ENCODE measurements at regions of chr5 and their contacts with region 1.

Region 1: GRCh38 chr5:53095931-53096525 is 13.5 kb downstream of the MOCS2 start:
- DNase-seq: peak; percentile 51
- H3K4me3 ChIP-seq: no peak overlapping the region
- H3K27ac ChIP-seq: no peak overlapping the region
- H3K4me1 ChIP-seq: no peaks in the 10 kb centered on the region
- CTCF ChIP-seq: peak; percentile 97

Region 2: DNA sequence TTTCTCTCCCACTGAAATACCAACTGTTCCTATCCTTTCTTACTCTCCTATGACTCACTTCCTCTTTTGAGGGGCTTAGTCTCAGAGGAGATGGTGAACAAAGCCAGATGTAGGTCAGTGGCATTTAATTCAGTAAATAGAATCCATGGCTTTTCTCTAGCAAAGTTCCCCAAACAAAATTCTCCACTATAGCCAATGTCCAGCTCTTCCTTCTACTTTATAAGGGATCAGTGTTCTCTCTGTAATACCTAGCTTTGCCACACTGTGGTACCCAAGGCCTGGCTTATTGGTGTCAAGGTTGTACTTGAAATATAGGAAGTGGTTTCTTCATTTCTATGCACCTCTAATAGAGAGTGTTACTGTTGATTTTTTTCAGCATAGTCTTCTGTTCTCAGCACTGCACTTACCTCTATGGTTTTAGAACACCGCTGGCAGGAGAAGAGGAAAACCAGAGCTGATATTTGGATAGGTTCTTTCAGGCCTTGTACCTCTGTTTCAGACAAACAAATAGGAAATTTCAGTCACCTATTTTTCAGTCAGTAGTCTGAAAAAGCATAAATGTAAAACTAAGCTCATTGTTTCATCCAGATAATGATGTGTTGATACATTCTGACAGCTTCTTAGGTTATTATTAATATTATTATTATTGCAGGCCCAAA is 147.5 kb before region 1 on chr5:
- CTCF ChIA-PET with region 1: no interaction called
- POLR2A ChIA-PET with region 1: no interaction called
- intact Hi-C with region 1: loop called (anchors 1 kb)
- DNase-seq: peak; percentile 61
- H3K4me3 ChIP-seq: no peak overlapping the region
- H3K27ac ChIP-seq: no peak overlapping the region
- H3K4me1 ChIP-seq: no peaks in the 10 kb centered on the region
- CTCF ChIP-seq: peak; percentile 80

Measured in OCI-LY7 (cell line).